Posterior vena cava (tissue), 2 donors: ENCODE measurements at regions of chr6 and their contacts with region 1.

Region 1: DNA sequence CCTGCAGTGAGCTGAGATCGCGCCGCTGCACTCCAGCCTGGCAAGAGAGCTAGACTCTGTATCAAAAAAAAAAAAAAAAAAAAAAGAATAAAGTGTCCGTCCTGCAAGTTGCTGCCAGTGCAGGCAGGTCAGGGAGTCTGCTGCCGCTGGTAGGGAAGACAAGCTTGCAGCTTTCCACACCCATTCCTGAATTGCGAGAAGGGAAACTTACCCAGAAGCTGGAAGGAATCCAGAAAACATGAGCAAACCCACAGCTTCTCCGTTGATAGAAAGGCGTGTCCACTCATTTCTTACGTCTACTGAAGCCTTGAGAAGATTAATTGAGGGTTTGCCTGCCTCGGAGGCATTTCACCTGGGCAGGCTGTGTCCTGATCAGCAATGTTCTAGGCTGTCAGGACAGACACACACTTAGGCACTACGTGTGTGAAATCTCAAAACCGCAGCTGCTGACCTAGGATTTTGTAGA is 61.6 kb upstream of the DSP start:
- DNase-seq: no peak

Region 2: DNA sequence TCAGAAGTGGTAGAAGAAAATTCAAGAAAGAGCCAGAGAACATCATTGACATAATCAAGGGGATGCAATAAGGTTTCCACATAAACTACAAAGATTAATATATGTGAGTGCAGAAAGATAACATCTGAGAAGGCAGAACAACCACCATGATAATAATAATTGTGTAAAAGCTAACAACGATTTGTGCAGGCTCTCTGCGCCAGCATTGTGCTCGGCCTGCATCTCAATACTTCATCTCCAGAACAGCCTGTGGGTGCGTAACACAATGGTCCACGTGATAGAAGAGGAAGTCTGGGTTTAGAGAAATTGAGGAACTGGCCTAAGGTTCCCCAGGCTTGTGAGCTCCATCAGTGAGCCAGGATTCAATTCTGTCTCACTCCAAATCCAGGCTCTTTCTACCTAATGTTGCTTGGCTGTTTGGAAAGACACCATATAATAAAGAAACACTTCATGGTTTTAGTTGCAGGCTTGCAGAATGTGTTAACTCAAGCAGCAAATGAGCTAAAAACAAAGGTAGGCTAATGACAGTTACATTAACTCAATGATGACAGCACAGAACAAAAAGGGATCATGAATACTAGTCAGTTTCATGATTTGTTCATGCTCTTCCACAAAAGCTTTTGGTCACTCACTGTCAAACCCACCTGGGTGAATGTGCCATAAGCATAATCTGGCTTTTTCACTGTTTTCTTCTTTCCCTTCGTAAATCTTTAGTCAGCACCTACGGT is 820.1 kb before region 1 on chr6:
- intact Hi-C with region 1: loop called in 1 of 2 experiments (anchors 10 kb)
- DNase-seq: peak; percentile 64

Region 3: GRCh38 chr6:7216941-7217621 is 262.8 kb before region 1 on chr6:
- intact Hi-C with region 1: no loop called
- DNase-seq: no peak

Region 4: DNA sequence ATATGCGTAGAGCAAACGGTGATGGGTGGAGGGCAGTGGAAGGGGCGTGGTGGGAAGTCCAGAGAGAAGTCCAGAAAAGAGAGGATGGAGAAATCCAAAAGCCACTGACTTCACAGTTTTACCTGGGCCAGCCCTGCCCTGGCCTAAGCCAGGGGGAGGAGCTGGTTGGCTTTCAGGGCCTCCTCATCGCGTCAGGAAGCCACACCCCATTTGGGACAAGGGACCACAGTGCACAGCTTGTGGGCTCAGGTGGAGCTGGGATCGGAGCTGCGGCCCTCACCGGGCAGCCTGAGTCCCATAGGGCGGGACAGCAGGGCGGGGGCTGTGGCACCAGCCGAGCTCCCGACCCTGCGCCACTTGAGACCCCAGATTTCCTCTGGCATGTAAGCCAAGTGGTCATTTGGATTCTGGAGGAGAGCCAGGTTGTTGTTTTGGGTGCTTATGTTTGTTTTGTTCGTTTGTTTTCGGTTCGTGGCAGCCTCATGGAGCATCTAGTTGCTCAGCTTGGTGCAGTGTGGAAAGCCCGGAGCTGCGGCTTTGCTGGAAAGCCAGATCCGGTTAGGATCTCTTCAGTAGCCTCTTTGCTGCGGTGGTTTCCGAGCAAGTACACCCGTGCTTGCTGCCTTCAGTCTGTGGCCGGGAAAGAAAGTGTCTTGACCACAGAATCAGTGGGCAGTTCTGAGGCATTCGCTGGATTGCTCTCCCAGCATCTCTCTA is 48.0 kb before region 1 on chr6:
- intact Hi-C with region 1: no loop called
- DNase-seq: no peak